Gastrocnemius medialis (tissue), 4 donors: ENCODE measurements at regions of chr2 and their contacts with region 1.

Region 1: DNA sequence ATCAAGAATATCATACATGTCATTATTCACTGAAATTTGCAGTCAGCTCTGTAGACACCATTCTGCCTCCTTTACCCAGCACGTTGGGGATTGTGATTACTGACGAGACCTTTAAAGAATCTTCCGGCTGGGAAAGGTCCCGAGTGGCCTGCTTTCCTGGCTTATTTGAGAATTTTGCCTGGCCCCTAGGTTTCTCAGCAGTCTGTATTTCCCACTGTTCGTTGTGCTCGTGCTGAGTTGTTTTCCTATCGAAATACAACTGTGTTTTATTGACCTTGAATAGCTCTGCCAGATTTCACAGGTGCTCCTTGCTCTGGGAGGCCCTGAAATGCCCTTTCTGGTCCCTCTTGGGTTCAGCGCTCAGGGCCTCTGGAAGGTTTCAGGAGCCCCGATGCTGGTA is 94.9 kb downstream of the AGAP1 start:
- DNase-seq: no peak
- ATAC-seq: peak in 1 of 2 donors; percentile 26
- H3K4me3 ChIP-seq: no peak overlapping the region
- H3K27ac ChIP-seq: no peak overlapping the region
- H3K4me1 ChIP-seq: peaks cover 5 to 7% of the 10 kb centered on the region in 2 donors
- H3K27me3 ChIP-seq: no peaks in the 10 kb centered on the region
- CTCF ChIP-seq: no peak
- POLR2A ChIP-seq: no peak

Region 2: DNA sequence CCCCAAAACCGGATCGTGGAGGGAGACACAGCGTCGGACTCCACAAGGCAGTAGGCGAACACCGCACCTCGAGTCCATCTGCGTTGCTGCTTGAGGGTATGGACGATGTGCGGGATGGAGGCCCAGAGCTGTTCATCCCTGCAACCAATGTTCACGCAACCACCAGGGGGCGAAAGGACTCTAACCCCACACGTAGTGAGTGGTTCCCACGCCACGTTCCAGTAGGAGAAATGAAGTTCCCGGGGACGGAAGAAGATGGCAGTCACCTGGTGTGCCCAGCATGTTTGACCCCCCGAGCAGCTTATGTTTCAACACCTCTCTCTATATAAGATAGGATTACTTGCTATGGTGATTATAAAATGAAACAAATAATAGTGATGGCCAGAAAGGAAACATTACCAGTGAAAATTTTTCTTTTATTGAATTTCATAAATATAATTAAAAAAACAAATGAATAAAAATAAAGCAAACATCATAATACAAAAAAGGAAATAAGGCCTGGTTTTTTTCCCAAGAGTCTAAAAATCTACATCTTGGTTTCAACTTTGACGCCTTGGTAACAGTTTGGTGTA is 452.7 kb before region 1 on chr2:
- in situ Hi-C with region 1: loop called (anchors 5 to 25 kb)
- intact Hi-C with region 1: no loop called
- DNase-seq: peak; percentile 32 to 40
- ATAC-seq: peak; percentile 51 to 68
- H3K4me3 ChIP-seq: no peak overlapping the region
- H3K27ac ChIP-seq: no peak overlapping the region
- H3K4me1 ChIP-seq: no peaks in the 10 kb centered on the region
- H3K27me3 ChIP-seq: no peaks in the 10 kb centered on the region
- CTCF ChIP-seq: peak; percentile 20 to 65 (median 52)
- POLR2A ChIP-seq: no peak

Region 3: DNA sequence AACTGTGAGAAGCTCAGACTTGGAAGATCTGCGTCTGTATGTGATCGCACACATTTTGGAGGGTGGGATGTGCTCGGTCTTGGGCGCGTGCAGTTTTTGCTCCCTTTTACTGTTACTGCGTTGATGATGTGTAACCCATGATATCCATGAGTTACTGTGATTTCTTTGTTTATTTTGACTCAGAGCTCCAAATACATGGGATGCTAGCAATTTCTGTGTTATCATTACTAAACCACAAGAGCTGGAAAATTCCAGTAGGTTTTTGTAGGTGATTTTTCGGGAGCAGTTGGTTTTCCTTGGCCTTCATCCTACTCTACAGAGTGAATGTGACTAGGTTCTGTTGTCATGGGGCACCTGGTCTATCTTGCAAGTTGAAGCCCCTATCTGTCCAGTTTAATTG is 29.3 kb after region 1 on chr2:
- in situ Hi-C with region 1: no loop called
- intact Hi-C with region 1: no loop called
- DNase-seq: no peak
- ATAC-seq: no peak
- H3K4me3 ChIP-seq: no peak overlapping the region
- H3K27ac ChIP-seq: no peak overlapping the region
- H3K4me1 ChIP-seq: peaks cover 32 to 33% of the 10 kb centered on the region in 2 donors
- H3K27me3 ChIP-seq: no peaks in the 10 kb centered on the region
- CTCF ChIP-seq: no peak
- POLR2A ChIP-seq: no peak